ENCODE measurements at regions of chr10 and their contacts with region 1.

Region 1: GRCh38 chr10:1674501-1674900 is 62.8 kb downstream of the ADARB2 start:
- DNase-seq: peak; percentile 30

Region 2: GRCh38 chr10:1715836-1716245 is 41.3 kb after region 1 on chr10:
- intact Hi-C with region 1: loop called in 1 of 2 experiments (anchors 1 kb)
- DNase-seq: no peak

Region 3: DNA sequence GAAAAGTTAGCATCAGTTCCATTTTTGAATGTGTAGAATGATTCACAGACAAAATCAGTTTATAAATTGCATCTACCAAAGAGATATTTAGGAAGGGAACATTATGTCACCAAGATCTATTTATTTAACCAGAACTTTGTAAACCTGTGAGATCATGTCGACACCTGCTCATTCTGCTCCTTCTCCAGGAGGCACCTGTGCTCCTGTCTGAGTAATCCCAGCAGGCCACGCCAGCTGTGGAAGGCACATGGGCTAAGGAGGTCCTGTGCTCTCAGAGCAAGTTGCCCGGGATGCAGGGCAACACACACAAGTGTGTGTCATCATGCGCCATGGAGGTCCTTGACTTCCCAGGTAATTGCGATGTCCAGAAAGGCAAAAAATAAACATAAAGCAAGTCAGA is 108.3 kb after region 1 on chr10:
- intact Hi-C with region 1: no loop called
- DNase-seq: no peak

Measured in posterior vena cava (tissue), 2 donors.